HepG2 (cell line): ENCODE measurements at regions of chr7 and their contacts with region 1.

Region 1: DNA sequence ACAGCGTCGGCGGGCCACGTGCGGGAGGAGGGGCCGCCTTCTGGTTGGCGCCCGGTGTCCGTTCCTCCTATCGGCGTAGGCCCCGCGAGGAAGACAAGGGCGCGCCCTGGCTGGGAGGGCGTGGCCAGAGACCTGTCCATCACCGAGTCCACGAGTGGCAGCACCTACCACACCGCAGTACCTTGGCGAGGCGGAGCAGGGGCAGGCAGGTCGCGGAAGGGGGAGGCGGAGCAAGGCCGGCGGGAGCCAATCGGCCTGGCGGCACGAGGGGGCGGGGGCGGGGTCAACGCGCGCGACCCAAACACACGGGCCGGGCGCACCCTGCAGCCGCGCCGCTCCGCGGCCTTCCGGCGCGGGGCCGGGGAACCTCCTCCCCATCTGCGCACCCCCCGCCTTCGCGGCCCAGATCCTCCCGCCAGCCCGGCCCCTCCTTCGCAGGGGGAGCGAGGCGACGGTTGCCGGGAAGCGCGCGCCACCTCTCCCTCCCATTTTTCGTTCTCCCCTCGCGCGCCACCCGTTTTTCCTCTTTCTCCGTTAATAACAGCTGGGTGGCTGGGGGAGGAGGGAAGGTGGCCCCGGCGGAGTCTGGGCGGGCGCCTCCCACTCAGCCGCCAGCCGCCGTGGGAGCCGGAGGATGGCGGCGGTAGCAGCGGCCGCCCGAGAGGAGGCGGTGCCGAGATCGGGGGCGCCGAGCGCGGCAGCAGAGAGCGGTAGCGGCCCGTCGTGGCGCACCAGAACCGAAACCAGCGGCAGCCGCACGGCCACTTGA is at the start of gene ZNRF2:
- DNase-seq: peak; percentile 98
- ATAC-seq: peak; percentile 94
- H3K4me3 ChIP-seq: peak within 1 kb of the TSS; percentile 82 to 88 (median 87)
- H3K27ac ChIP-seq: peak within 1 kb of the TSS; percentile 94
- H3K4me1 ChIP-seq: peaks cover 54% of the 10 kb centered on the region
- H3K27me3 ChIP-seq: no peaks in the 10 kb centered on the region
- CTCF ChIP-seq: peak; percentile 59
- EP300 ChIP-seq: no peak; a peak in 1 of 4 replicates
- POLR2A ChIP-seq: peak; percentile 46 to 64
- RAD21 ChIP-seq: peak; percentile 40; the same call in 1 of the 2 replicates
- total RNA-seq, gene ZNRF2: 6.9 and 7.7 TPM in 2 replicates

Region 2: DNA sequence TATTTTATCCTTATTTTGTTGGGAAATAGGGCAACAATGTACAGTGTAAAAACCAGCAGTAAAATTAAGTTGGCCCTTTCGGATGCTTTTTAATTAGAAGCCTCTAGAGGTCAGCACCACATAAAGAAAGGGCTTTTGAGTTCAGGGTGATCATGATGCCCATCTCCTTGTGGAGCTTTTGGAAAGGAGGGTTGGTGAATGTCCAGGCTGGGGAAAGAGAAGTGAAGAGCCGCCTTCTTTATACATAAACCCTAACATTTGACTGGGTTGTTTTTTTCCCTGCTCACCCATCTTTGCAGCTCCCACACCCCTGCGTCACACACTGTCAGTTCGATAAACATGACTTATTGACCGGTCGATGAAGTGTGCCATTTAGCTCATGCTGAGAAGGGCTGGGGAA is 119.9 kb before region 1 on chr7:
- CTCF ChIA-PET with region 1: no interaction called
- POLR2A ChIA-PET with region 1: no interaction called
- in situ Hi-C with region 1: loop called (anchors 10 kb)
- intact Hi-C with region 1: no loop called
- DNase-seq: peak; percentile 60
- ATAC-seq: peak; percentile 50
- H3K4me3 ChIP-seq: no peak overlapping the region
- H3K27ac ChIP-seq: no peak overlapping the region
- H3K4me1 ChIP-seq: peaks cover 60% of the 10 kb centered on the region
- H3K27me3 ChIP-seq: no peaks in the 10 kb centered on the region
- CTCF ChIP-seq: peak; percentile 71
- EP300 ChIP-seq: no peak
- POLR2A ChIP-seq: no peak
- RAD21 ChIP-seq: peak; percentile 72

Region 3: GRCh38 chr7:30255064-30255769 is 29.3 kb before region 1 on chr7:
- CTCF ChIA-PET with region 1: no interaction called
- POLR2A ChIA-PET with region 1: interaction called, 5 read pairs
- in situ Hi-C with region 1: no loop called
- intact Hi-C with region 1: loop called (anchors 2 kb)
- DNase-seq: peak; percentile 98
- ATAC-seq: peak; percentile 90
- H3K4me3 ChIP-seq: peak overlapping the region in 1 of 3 experiments; percentile 50; a peak in 1 of 6 replicates
- H3K27ac ChIP-seq: peak overlapping the region; percentile 72
- H3K4me1 ChIP-seq: peaks cover 57% of the 10 kb centered on the region
- H3K27me3 ChIP-seq: no peaks in the 10 kb centered on the region
- CTCF ChIP-seq: no peak; the same call in 1 of the 2 replicates
- EP300 ChIP-seq: peak; percentile 33 to 84; a peak in 2 of 4 replicates
- POLR2A ChIP-seq: no peak
- RAD21 ChIP-seq: 0 out of 2 replicates have a peak, but pooled peaks have one; percentile 30

Region 4: DNA sequence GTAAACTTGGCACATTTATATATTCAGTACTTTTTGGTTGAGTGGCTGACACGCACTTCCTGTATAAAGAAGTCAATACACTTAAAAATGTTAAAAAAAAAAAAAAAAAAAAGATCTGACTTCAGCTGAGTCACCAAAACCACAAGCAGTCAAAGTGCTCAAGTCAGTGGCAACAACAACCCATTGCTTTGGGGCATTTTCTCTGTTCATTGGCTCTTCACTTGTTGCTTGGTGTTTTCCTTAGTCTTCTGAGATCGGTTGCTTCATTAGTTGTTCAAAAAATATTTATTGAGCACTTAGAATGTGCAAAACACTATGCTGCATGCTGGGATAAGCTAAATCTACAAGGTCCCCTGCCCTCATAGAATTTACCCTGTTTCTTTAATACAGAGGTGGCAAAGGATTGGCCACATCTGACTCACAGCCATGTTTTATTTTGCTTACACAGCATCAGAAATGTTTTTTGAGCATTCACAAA is 63.6 kb after region 1 on chr7:
- CTCF ChIA-PET with region 1: no interaction called
- POLR2A ChIA-PET with region 1: no interaction called
- in situ Hi-C with region 1: no loop called
- intact Hi-C with region 1: loop called (anchors 10 kb)
- DNase-seq: peak; percentile 30
- ATAC-seq: no peak
- H3K4me3 ChIP-seq: no peak overlapping the region
- H3K27ac ChIP-seq: no peak overlapping the region
- H3K4me1 ChIP-seq: peaks cover 13% of the 10 kb centered on the region; the same call in 1 of the 2 replicates
- H3K27me3 ChIP-seq: no peaks in the 10 kb centered on the region
- CTCF ChIP-seq: no peak
- EP300 ChIP-seq: no peak
- POLR2A ChIP-seq: no peak
- RAD21 ChIP-seq: no peak